ENCODE measurements at regions of chr1 and their contacts with region 1.

Region 1: GRCh38 chr1:173429471-173430402 is 47.4 kb upstream of the PRDX6 start:
- DNase-seq: peak; percentile 54
- ATAC-seq: peak; percentile 87
- H3K4me3 Mint-ChIP-seq: peak overlapping the region; percentile 71
- H3K27ac Mint-ChIP-seq: peak overlapping the region; percentile 87
- H3K4me1 Mint-ChIP-seq: peaks cover 25% of the 10 kb centered on the region
- H3K27me3 Mint-ChIP-seq: no peaks in the 10 kb centered on the region
- CTCF ChIP-seq: no peak

Region 2: DNA sequence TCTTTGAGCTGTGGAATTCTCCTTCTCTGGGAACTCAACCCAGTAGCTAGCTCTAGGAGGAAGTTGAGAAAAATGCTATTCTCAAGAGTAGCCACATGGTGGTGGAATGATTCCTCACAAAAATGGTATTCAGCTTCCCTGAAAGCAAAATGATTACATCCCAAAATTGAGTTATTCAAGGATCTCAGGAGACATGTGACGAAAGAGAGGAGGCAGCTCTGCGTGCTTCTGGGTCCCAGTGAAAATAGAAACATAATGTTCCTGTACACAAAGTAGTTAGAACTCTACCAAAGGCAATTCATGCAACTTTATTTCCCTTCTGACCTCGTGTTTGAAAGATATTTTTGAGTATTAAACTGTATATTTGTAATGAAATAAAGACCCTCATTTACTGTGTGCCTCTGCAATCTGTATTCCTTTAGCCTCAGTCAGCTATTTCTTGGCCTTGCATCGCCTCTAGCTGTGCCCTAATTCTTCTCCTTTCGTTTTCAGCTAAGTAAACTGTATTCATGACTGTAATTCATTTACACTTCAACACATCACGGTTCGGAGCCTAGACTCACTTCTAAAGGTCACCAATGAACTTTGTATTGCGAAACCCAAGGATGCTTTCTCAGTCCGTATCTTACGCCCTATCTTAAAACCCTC is 603.5 kb before region 1 on chr1:
- CTCF ChIA-PET with region 1: interaction called, 21 read pairs
- POLR2A ChIA-PET with region 1: no interaction called
- intact Hi-C with region 1: no loop called
- DNase-seq: no peak
- ATAC-seq: peak; percentile 62
- H3K4me3 Mint-ChIP-seq: no peak overlapping the region
- H3K27ac Mint-ChIP-seq: no peak overlapping the region
- H3K4me1 Mint-ChIP-seq: peaks cover 2% of the 10 kb centered on the region
- H3K27me3 Mint-ChIP-seq: no peaks in the 10 kb centered on the region
- CTCF ChIP-seq: no peak

Region 3: GRCh38 chr1:173476664-173477285 is 47.0 kb after region 1 on chr1:
- CTCF ChIA-PET with region 1: interaction called, 28 read pairs
- POLR2A ChIA-PET with region 1: interaction called, 25 read pairs
- intact Hi-C with region 1: loop called (anchors 1 kb)
- DNase-seq: peak; percentile 70
- ATAC-seq: peak; percentile 94
- H3K4me3 Mint-ChIP-seq: peak overlapping the region; percentile 92
- H3K27ac Mint-ChIP-seq: peak overlapping the region; percentile 95
- H3K4me1 Mint-ChIP-seq: peaks cover 40% of the 10 kb centered on the region
- H3K27me3 Mint-ChIP-seq: no peaks in the 10 kb centered on the region
- CTCF ChIP-seq: no peak

Region 4: GRCh38 chr1:173824331-173825081 is 394.8 kb after region 1 on chr1 and contains the starts of genes CENPL and DARS2:
- CTCF ChIA-PET with region 1: interaction called, 32 read pairs
- POLR2A ChIA-PET with region 1: interaction called, 12 read pairs
- intact Hi-C with region 1: loop called (anchors 1 kb)
- DNase-seq: peak; percentile 80
- ATAC-seq: peak; percentile 89
- H3K4me3 Mint-ChIP-seq: peak within 1 kb of the TSS; percentile 95
- H3K27ac Mint-ChIP-seq: peak within 1 kb of the TSS; percentile 97
- H3K4me1 Mint-ChIP-seq: peaks cover 28% of the 10 kb centered on the region
- H3K27me3 Mint-ChIP-seq: no peaks in the 10 kb centered on the region
- CTCF ChIP-seq: no peak
- total RNA-seq, gene CENPL: 12.7 and 14.0 TPM in 2 replicates
- total RNA-seq, gene DARS2: 24.0 and 26.0 TPM in 2 replicates

Region 5: DNA sequence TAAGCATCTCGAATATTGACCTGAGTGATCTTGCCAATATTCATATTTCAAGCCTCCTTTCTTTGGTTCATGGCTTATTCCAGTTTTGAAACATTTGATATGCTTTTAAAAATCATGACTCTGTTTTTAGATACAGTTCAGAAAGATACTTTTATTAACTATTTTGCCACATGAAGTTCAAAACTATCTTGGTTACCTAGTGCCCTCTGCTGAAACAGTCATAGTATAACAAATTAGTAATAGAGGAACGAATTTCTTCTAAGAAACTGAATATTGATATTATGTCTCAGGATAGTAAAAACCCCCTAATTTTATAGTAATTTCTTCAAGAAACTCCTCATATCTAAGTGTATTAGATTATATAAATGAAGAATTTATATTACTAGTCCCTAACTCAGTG is 645.0 kb after region 1 on chr1:
- CTCF ChIA-PET with region 1: interaction called, 4 read pairs
- POLR2A ChIA-PET with region 1: no interaction called
- intact Hi-C with region 1: loop called (anchors 5 kb)
- DNase-seq: no peak
- ATAC-seq: no peak
- H3K4me3 Mint-ChIP-seq: no peak overlapping the region
- H3K27ac Mint-ChIP-seq: no peak overlapping the region
- H3K4me1 Mint-ChIP-seq: no peaks in the 10 kb centered on the region
- H3K27me3 Mint-ChIP-seq: peaks cover 3% of the 10 kb centered on the region
- CTCF ChIP-seq: no peak